Endothelial cell of umbilical vein (primary cell): ENCODE measurements at regions of chr1 and their contacts with region 1.

Region 1: GRCh38 chr1:226827968-226828513 is 42.4 kb upstream of the PSEN2 start:
- DNase-seq: peak; percentile 87
- H3K4me3 ChIP-seq: no peak overlapping the region
- H3K27ac ChIP-seq: peak overlapping the region; percentile 90
- H3K4me1 ChIP-seq: peaks cover 6% of the 10 kb centered on the region
- H3K27me3 ChIP-seq: peaks cover 0 to 4% of the 10 kb centered on the region in 2 experiments
- CTCF ChIP-seq: peak; percentile 89 to 95
- POLR2A ChIP-seq: no peak

Region 2: GRCh38 chr1:226626577-226626956 is 201.5 kb before region 1 on chr1:
- CTCF ChIA-PET with region 1: interaction called, 85 read pairs
- POLR2A ChIA-PET with region 1: no interaction called
- dilution Hi-C with region 1: no loop called
- intact Hi-C with region 1: loop called (anchors 2 kb)
- DNase-seq: peak; percentile 66
- H3K4me3 ChIP-seq: no peak overlapping the region
- H3K27ac ChIP-seq: no peak overlapping the region
- H3K4me1 ChIP-seq: no peaks in the 10 kb centered on the region
- H3K27me3 ChIP-seq: no peaks in the 10 kb centered on the region
- CTCF ChIP-seq: peak; percentile 94 to 97
- POLR2A ChIP-seq: no peak

Region 3: DNA sequence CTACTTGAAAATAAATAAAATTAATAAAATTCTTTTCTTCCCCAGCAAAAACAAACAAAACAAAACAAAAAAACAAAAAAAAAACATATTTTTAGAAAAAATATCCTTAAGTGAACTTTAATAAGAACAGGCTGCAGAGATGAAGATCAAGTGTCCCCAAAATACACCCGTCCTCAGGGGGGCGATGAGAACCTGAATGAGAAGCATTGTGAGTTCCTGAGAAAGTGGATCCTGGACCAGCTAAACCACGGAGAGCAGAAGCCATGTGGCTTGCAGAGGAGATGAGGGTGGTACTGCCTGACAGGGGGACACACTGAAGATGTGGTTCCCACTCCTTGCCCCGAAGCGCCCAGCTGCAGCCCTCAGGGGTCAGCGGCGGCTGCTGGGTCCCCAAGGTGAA is 178.3 kb before region 1 on chr1:
- CTCF ChIA-PET with region 1: interaction called, 31 read pairs
- POLR2A ChIA-PET with region 1: no interaction called
- dilution Hi-C with region 1: no loop called
- intact Hi-C with region 1: loop called (anchors 1 kb)
- DNase-seq: peak; percentile 68
- H3K4me3 ChIP-seq: no peak overlapping the region
- H3K27ac ChIP-seq: no peak overlapping the region
- H3K4me1 ChIP-seq: peaks cover 12% of the 10 kb centered on the region
- H3K27me3 ChIP-seq: no peaks in the 10 kb centered on the region
- CTCF ChIP-seq: peak in 1 of 2 donors; percentile 38
- POLR2A ChIP-seq: no peak

Region 4: DNA sequence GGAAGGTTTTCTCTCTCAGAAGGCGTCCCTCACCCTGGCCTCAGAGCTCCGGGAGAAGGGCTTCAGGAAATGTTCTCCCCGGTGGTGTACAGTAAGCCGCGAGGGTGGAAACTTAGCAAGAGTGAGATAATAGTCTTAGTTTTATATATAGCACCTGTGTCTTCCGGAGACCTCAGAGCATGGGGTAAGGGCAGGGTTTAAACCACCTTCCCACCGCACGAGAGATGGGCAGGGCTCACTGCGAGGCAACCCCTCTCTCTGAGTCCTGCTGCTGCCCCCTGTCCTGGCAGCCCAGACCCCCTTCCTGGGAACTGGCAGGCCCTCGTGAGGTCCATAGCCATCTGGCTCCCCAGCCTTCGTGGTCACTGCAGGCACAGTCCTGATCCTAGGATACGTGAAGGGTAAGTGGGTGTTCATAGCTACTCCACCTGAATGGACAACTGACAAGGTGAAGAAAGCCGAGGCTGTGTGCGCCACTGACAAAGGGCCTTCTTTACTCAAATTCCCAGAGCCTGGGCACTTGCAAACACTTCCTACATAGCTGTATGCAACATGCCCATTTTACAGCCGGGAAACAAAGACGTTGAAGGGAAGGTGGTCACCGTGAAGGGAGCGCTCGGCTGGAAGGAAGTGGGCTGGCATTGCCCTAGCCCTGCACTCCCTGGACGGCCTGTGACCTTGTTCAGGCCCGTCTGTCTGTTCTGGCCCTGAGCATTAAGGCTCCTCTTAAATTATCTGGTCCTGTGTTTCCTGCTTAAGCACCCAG is 115.9 kb before region 1 on chr1:
- CTCF ChIA-PET with region 1: interaction called, 5 read pairs
- POLR2A ChIA-PET with region 1: no interaction called
- dilution Hi-C with region 1: no loop called
- intact Hi-C with region 1: loop called (anchors 1 kb)
- DNase-seq: no peak
- H3K4me3 ChIP-seq: no peak overlapping the region
- H3K27ac ChIP-seq: no peak overlapping the region
- H3K4me1 ChIP-seq: peaks cover 20% of the 10 kb centered on the region
- H3K27me3 ChIP-seq: no peaks in the 10 kb centered on the region
- CTCF ChIP-seq: no peak
- POLR2A ChIP-seq: no peak

Region 5: GRCh38 chr1:226778657-226779058 is 49.4 kb before region 1 on chr1:
- CTCF ChIA-PET with region 1: interaction called, 10 read pairs
- POLR2A ChIA-PET with region 1: no interaction called
- dilution Hi-C with region 1: no loop called
- intact Hi-C with region 1: no loop called
- DNase-seq: peak; percentile 96
- H3K4me3 ChIP-seq: no peak overlapping the region
- H3K27ac ChIP-seq: peak overlapping the region; percentile 0
- H3K4me1 ChIP-seq: peaks cover 8% of the 10 kb centered on the region
- H3K27me3 ChIP-seq: no peaks in the 10 kb centered on the region
- CTCF ChIP-seq: no peak
- POLR2A ChIP-seq: no peak

Region 6: DNA sequence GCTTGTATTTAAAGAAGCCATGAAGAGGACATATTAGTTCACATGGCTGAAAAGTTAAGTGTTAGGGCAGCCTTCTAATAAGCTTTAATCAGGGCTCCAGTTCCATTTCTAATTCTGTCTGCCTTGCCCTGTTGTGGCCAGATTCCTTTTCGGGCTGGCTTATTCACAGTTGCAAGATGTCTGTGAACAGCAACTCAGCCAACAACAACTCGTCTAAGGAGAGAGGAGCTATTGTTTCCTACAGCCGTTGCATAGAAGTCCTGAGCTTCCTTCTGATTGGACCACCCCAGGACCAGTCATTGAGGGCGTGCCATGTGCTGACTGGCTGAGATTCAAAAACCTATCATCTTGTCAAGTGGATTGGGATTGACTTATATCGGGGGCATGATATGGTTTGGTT is 93.5 kb after region 1 on chr1:
- CTCF ChIA-PET with region 1: no interaction called
- POLR2A ChIA-PET with region 1: no interaction called
- dilution Hi-C with region 1: no loop called
- intact Hi-C with region 1: no loop called
- DNase-seq: no peak
- H3K4me3 ChIP-seq: no peak overlapping the region
- H3K27ac ChIP-seq: no peak overlapping the region
- H3K4me1 ChIP-seq: no peaks in the 10 kb centered on the region
- H3K27me3 ChIP-seq: no peaks in the 10 kb centered on the region
- CTCF ChIP-seq: no peak
- POLR2A ChIP-seq: no peak